Esophagus squamous epithelium (tissue), 5 donors: ENCODE measurements at regions of chr19 and their contacts with region 1.

Region 1: GRCh38 chr19:19821366-19821951 is at the start of gene ZNF506:
- DNase-seq: peak; percentile 89
- H3K4me3 ChIP-seq: peak within 1 kb of the TSS; percentile 55 to 87 (median 76)
- H3K27ac ChIP-seq: peak within 1 kb of the TSS; percentile 92 to 98 (median 94)
- H3K4me1 ChIP-seq: peaks cover 7 to 30% (median 10%) of the 10 kb centered on the region in 3 donors
- H3K27me3 ChIP-seq: no peaks in the 10 kb centered on the region
- CTCF ChIP-seq: no peak
- POLR2A ChIP-seq: peak in 3 of 4 donors; percentile 85 to 88 (median 86)
- total RNA-seq, gene ZNF506: 12.1 to 24.0 (median 17.8) TPM

Region 2: DNA sequence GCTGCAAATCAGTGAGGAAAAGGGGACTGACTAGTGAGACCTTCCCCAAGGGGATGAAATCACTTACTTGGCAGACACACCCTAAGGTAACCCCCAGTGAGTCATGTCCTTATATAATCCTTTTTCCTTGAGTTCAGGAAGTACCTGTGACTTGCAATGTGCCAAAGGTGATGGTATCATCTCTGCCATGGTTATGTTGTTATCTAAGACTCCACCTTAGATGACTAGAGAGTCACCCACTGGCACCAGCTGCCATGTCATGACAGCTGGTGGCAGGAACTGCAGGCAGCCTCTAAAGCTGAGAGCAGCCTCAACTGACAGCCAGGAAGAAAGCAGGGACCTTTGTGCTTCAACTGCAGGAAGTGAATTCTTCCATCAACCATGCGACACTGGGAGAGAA is 215.4 kb before region 1 on chr19:
- intact Hi-C with region 1: no loop called
- DNase-seq: no peak
- H3K4me3 ChIP-seq: no peak overlapping the region
- H3K27ac ChIP-seq: peak overlapping the region in 3 of 4 donors; percentile 8 to 34 (median 23)
- H3K4me1 ChIP-seq: peaks cover 4 to 33% (median 5%) of the 10 kb centered on the region in 3 donors
- H3K27me3 ChIP-seq: no peaks in the 10 kb centered on the region
- CTCF ChIP-seq: no peak
- POLR2A ChIP-seq: no peak

Region 3: DNA sequence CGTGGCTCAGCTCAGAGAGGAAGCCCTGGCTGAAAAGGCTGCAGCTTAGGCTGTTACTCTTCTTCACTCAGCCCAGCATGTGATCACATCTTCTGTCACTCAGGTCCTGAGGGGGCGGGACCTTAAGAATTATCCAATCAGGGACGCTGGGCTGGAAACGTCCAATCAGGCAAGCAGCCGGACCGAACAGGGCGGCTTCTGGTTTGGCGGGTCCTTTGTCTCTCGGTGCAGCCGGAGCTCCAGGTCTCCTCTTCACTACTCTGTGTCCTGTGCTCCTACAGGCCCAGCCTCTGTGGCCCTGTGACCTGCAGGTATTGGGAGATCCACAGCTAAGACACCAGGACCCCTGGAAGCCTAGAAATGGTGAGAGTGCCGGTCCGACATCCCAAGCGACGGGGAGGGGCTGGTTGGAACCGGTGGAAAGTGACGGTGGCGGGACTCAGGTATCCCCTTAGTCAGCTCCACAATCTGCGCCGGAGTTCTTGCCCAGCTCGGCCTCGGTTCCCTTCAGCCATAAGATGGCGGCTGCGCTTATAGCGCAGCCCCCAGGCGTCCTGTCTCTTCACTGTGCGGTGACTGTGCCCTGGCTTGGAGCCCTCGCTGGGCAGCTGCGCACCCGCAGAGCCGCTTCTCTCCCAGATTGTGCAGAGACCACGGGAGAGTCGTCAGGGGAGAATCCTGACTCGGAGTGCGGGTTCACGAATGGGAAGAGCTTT is 79.4 kb after region 1 on chr19 and contains the start of gene ZNF93:
- intact Hi-C with region 1: loop called (anchors 5 kb)
- DNase-seq: peak; percentile 79
- H3K4me3 ChIP-seq: peak within 1 kb of the TSS; percentile 43 to 86 (median 68)
- H3K27ac ChIP-seq: peak within 1 kb of the TSS; percentile 77 to 96 (median 87)
- H3K4me1 ChIP-seq: peaks cover 0 to 15% (median 0%) of the 10 kb centered on the region in 3 donors
- H3K27me3 ChIP-seq: no peaks in the 10 kb centered on the region
- CTCF ChIP-seq: no peak
- POLR2A ChIP-seq: peak in 3 of 4 donors; percentile 36 to 66 (median 54)
- total RNA-seq, gene ZNF93: 4.7 to 12.7 (median 7.4) TPM